Activated CD4-positive, alpha-beta T cell treated with anti-CD3 and anti-CD28 coated beads, Interleukin-2, amount 10 ng/mL, durations not matched to agents 24 days and 14 days (primary cell): ENCODE measurements at regions of chr14 and their contacts with region 1.

Region 1: GRCh38 chr14:35687335-35687939 is 121.7 kb downstream of the RALGAPA1 start:
- DNase-seq: peak; percentile 78
- H3K4me3 Mint-ChIP-seq: no peak overlapping the region
- H3K27ac Mint-ChIP-seq: no peak overlapping the region
- H3K4me1 Mint-ChIP-seq: peaks cover 14% of the 10 kb centered on the region
- H3K27me3 Mint-ChIP-seq: no peaks in the 10 kb centered on the region

Region 2: GRCh38 chr14:35140718-35141581 is 546.5 kb before region 1 on chr14:
- intact Hi-C with region 1: loop called (anchors 5 kb)
- DNase-seq: no peak
- H3K4me3 Mint-ChIP-seq: no peak overlapping the region
- H3K27ac Mint-ChIP-seq: no peak overlapping the region
- H3K4me1 Mint-ChIP-seq: peaks cover 19% of the 10 kb centered on the region
- H3K27me3 Mint-ChIP-seq: no peaks in the 10 kb centered on the region

Region 3: DNA sequence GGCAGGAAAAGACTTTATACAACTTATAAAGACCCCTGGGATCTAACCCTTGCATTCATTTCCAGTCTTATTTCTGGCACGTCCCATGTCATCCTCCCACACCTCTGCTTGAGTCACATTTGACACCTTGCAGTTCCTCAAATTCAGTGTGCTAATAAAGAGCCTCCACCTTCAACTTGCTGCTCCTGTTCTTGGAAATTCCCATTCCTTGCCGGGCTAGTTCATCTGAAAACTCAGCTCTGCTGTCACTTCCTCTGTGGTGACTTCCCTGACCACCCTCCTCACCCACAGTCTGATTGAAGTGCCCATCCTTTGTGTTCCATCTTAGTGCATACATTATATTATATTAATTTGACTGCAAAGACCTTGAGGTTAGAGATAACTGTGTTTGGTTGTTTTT is 432.7 kb before region 1 on chr14:
- intact Hi-C with region 1: loop called (anchors 10 kb)
- DNase-seq: peak; percentile 66
- H3K4me3 Mint-ChIP-seq: peak overlapping the region; percentile 41
- H3K27ac Mint-ChIP-seq: peak overlapping the region; percentile 80
- H3K4me1 Mint-ChIP-seq: peaks cover 38% of the 10 kb centered on the region
- H3K27me3 Mint-ChIP-seq: no peaks in the 10 kb centered on the region

Region 4: DNA sequence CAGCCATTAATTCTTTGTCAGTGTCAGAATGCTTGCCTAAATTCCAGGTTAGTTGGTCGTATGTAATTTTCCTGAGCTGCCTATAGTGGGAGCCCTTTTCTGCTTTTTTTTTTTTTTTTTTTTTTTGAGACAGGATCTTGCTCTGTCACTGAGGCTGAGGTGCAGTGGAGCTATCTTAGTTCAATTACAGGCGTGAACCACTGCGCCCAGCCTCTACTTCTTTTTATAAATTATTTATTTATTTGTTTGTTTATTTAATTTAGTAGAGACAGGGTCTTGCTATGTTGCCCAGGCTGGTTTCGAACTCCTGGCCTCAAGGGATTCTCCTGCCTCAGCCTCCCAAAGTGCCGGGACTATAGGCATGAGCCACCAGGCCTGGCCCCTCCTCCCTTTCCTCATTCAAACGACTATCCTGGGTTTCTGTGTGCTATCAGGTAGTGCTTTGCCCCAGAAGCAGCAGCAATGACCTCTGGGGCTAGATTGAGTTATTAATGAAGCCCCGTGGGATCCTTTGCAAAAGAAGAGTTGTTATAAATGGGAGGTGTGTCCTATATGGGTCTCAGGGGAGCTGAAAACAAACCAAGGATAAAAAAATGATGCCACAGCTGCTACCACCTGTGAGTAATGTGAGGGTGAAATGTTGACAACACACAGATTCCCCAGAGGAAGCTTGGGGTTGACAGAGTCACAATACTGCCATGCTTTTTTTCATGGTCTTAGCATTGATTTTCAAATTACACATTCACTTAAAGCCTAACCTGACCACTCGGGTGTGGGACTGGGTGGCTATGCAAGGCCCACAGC is 248.3 kb before region 1 on chr14:
- intact Hi-C with region 1: loop called (anchors 5 kb)
- DNase-seq: no peak
- H3K4me3 Mint-ChIP-seq: no peak overlapping the region
- H3K27ac Mint-ChIP-seq: no peak overlapping the region
- H3K4me1 Mint-ChIP-seq: peaks cover 7% of the 10 kb centered on the region
- H3K27me3 Mint-ChIP-seq: peaks cover 5% of the 10 kb centered on the region

Region 5: GRCh38 chr14:35533357-35534207 is 153.9 kb before region 1 on chr14 and contains the start of gene INSM2:
- intact Hi-C with region 1: loop called (anchors 5 kb)
- DNase-seq: peak; percentile 90
- H3K4me3 Mint-ChIP-seq: peak within 1 kb of the TSS; percentile 74
- H3K27ac Mint-ChIP-seq: no peak within 1 kb of the TSS
- H3K4me1 Mint-ChIP-seq: peaks cover 8% of the 10 kb centered on the region
- H3K27me3 Mint-ChIP-seq: peaks cover 66% of the 10 kb centered on the region
- total RNA-seq, gene INSM2: not detected in 2 replicates

Region 6: GRCh38 chr14:35632676-35633075 is 54.8 kb before region 1 on chr14:
- intact Hi-C with region 1: no loop called
- DNase-seq: no peak
- H3K4me3 Mint-ChIP-seq: no peak overlapping the region
- H3K27ac Mint-ChIP-seq: no peak overlapping the region
- H3K4me1 Mint-ChIP-seq: peaks cover 3% of the 10 kb centered on the region
- H3K27me3 Mint-ChIP-seq: no peaks in the 10 kb centered on the region

Region 7: GRCh38 chr14:35653045-35653444 is 34.4 kb before region 1 on chr14:
- intact Hi-C with region 1: no loop called
- DNase-seq: no peak
- H3K4me3 Mint-ChIP-seq: no peak overlapping the region
- H3K27ac Mint-ChIP-seq: no peak overlapping the region
- H3K4me1 Mint-ChIP-seq: peaks cover 2% of the 10 kb centered on the region
- H3K27me3 Mint-ChIP-seq: no peaks in the 10 kb centered on the region

Region 8: DNA sequence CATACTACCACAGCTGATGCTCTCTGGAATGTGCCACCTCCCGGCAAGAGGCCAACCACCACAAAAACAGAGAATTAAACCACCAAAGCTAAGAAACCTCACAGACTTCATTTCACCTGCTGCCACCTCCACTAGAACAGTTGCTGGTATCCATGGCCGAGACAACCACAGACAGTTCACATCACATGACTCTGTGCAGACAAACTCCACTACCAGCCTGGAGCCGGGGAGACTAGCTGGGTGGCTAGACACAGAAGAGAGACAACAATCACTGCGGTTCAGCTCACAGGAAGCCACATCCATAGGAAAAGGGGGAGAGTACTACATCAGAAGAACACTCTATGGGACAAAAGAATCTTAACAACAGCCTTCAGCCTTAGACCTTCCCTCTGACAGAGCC is 43.4 kb after region 1 on chr14:
- intact Hi-C with region 1: no loop called
- DNase-seq: no peak
- H3K4me3 Mint-ChIP-seq: no peak overlapping the region
- H3K27ac Mint-ChIP-seq: no peak overlapping the region
- H3K4me1 Mint-ChIP-seq: peaks cover 24% of the 10 kb centered on the region
- H3K27me3 Mint-ChIP-seq: no peaks in the 10 kb centered on the region

Region 9: DNA sequence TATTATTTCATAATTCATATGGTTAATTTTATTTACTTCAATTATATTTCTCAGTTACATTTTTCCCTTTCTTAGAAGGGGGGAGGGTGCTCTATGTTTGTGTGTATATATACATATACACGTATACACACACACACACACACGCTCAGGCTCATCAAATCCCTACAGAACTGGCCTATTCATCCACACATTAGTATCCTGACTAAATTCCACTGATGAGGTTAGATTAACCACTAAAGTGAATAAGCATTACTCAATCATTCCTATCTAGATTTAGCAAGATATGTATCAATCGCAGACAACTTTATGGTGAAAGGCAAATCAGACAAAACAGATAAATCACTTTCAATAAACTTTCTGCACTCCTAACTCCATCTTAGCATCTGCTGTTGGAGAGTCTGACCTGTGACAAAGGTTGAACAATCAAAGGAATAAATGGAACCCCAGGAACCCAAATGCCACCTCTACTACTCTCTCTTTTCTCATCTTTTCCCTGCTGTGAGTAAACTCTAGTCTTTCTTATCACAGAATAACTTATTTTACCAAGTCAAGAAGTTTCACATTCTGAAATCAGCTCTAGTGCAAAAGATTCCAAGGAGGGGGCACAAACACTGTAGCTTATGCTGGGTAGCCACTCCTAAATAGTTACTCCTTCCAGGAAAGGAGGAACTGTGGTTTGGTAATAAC is 54.1 kb after region 1 on chr14:
- intact Hi-C with region 1: loop called (anchors 1 kb)
- DNase-seq: no peak
- H3K4me3 Mint-ChIP-seq: peak overlapping the region; percentile 1
- H3K27ac Mint-ChIP-seq: peak overlapping the region; percentile 35
- H3K4me1 Mint-ChIP-seq: peaks cover 16% of the 10 kb centered on the region
- H3K27me3 Mint-ChIP-seq: no peaks in the 10 kb centered on the region

Region 10: DNA sequence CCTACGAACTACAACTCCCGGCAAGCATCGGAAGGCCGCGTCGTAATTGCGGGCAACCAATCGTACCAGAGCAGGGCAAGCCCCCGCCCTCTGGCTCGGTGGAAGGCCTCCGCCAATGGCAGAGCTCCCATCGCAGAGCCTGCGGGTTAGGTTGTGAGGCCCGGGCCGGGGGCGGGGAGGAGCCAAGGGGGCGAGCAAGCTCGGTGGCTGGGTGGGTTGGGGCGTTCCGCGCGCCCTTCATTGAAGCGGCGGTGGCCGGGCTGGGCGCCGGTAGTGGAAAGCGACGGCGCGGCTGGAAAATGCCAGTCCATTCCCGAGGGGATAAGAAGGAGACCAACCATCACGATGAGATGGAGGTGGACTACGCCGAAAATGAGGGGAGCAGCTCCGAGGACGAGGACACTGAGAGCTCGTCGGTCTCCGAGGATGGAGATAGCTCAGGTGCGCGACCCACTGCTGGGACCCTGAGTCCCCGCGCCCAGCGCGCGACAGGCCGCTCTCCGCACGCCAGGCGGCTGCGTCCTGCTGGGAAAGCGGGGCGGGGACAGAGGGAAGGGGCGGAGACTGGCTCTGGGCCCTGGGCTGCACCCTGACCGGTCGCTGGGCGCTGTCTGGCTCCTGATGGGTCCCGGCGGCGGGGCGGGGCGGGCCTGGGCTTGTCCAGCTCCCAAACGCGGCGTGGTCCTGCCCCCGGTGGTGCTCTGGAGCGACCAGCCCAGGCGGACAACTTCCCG is 138.9 kb after region 1 on chr14 and contains the start of gene BRMS1L:
- intact Hi-C with region 1: loop called (anchors 5 kb)
- DNase-seq: peak; percentile 99
- H3K4me3 Mint-ChIP-seq: peak within 1 kb of the TSS; percentile 93
- H3K27ac Mint-ChIP-seq: peak within 1 kb of the TSS; percentile 93
- H3K4me1 Mint-ChIP-seq: peaks cover 25% of the 10 kb centered on the region
- H3K27me3 Mint-ChIP-seq: peaks cover 2% of the 10 kb centered on the region
- total RNA-seq, gene BRMS1L: 6.0 and 8.2 TPM in 2 replicates